HepG2 (cell line): ENCODE measurements at regions of chr18 and their contacts with region 1.

Region 1: GRCh38 chr18:58392324-58393000 is 236.4 kb downstream of the ALPK2 start:
- DNase-seq: no peak
- ATAC-seq: no peak; the same call in 2 of the 3 replicates
- H3K4me3 ChIP-seq: no peak overlapping the region
- H3K27ac ChIP-seq: peak overlapping the region; percentile 53
- H3K4me1 ChIP-seq: peaks cover 86% of the 10 kb centered on the region
- H3K27me3 ChIP-seq: no peaks in the 10 kb centered on the region
- CTCF ChIP-seq: no peak
- EP300 ChIP-seq: no peak
- POLR2A ChIP-seq: peak in 1 of 2 experiments; percentile 11; a peak in 1 of 4 replicates
- RAD21 ChIP-seq: no peak

Region 2: GRCh38 chr18:57959278-57959677 is 433.2 kb before region 1 on chr18:
- CTCF ChIA-PET with region 1: no interaction called
- POLR2A ChIA-PET with region 1: no interaction called
- in situ Hi-C with region 1: loop called (anchors 10 kb)
- intact Hi-C with region 1: loop called (anchors 5 kb)
- DNase-seq: peak; percentile 66
- ATAC-seq: peak; percentile 96
- H3K4me3 ChIP-seq: no peak overlapping the region; a peak in 1 of 6 replicates
- H3K27ac ChIP-seq: no peak overlapping the region
- H3K4me1 ChIP-seq: peaks cover 30% of the 10 kb centered on the region
- H3K27me3 ChIP-seq: no peaks in the 10 kb centered on the region
- CTCF ChIP-seq: peak; percentile 83
- EP300 ChIP-seq: no peak
- POLR2A ChIP-seq: no peak
- RAD21 ChIP-seq: peak; percentile 62; the same call in 1 of the 2 replicates

Region 3: GRCh38 chr18:58051765-58052460 is 340.5 kb before region 1 on chr18:
- CTCF ChIA-PET with region 1: no interaction called
- POLR2A ChIA-PET with region 1: interaction called, 16 read pairs
- in situ Hi-C with region 1: loop called (anchors 5 kb)
- intact Hi-C with region 1: no loop called
- DNase-seq: no peak
- ATAC-seq: no peak
- H3K4me3 ChIP-seq: peak overlapping the region; percentile 12 to 41 (median 36); a peak in 3 of 6 replicates
- H3K27ac ChIP-seq: peak overlapping the region; percentile 37
- H3K4me1 ChIP-seq: peaks cover 77% of the 10 kb centered on the region
- H3K27me3 ChIP-seq: no peaks in the 10 kb centered on the region; a peak in 1 of 5 replicates
- CTCF ChIP-seq: peak; percentile 37
- EP300 ChIP-seq: no peak
- POLR2A ChIP-seq: no peak
- RAD21 ChIP-seq: no peak

Region 4: GRCh38 chr18:58407649-58408407 is 15.4 kb after region 1 on chr18:
- CTCF ChIA-PET with region 1: no interaction called
- POLR2A ChIA-PET with region 1: interaction called, 13 read pairs
- in situ Hi-C with region 1: no loop called
- intact Hi-C with region 1: no loop called
- DNase-seq: peak; percentile 100
- ATAC-seq: peak; percentile 74
- H3K4me3 ChIP-seq: peak overlapping the region in 1 of 3 experiments; percentile 47; a peak in 1 of 6 replicates
- H3K27ac ChIP-seq: peak overlapping the region; percentile 98
- H3K4me1 ChIP-seq: peaks cover 99% of the 10 kb centered on the region
- H3K27me3 ChIP-seq: no peaks in the 10 kb centered on the region
- CTCF ChIP-seq: peak; percentile 59
- EP300 ChIP-seq: peak; percentile 95 to 100
- POLR2A ChIP-seq: peak in 1 of 2 experiments; percentile 51; a peak in 1 of 4 replicates
- RAD21 ChIP-seq: peak; percentile 66

Region 5: DNA sequence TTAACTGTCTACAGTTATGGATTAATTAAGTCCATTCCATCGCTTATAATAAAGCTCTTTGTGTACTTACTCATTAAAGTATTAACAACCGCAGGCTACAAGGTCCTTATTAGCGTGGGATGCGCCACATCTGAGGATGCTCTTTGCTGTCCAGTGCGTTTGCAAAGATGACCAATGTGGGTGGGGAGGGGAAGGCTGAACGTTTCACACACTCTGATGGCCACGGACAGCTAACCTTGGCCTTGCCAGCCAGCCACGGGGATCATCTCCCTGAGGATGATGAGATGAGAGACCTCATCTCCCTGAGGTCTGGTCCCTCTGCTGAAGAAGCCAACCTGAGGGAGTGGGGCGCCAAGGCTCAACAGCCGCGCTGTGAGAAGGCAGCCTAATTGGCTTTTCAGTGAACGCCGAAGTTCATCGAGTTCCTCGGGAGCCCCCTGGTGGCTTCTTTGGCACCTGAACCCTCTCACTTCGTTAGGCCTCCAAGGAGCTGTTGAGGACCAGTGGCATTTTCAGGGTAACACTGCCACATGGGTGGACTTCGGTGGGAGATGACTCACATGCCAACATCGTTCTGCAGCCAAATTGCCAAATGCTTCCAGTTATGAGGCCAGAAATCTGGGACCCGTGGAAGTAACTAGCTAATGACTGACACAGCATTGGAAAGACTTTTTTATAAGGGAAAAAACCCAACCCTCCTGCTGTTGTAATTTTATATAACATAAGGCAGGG is 677.9 kb after region 1 on chr18:
- CTCF ChIA-PET with region 1: no interaction called
- POLR2A ChIA-PET with region 1: no interaction called
- in situ Hi-C with region 1: loop called (anchors 25 kb)
- intact Hi-C with region 1: no loop called
- DNase-seq: peak; percentile 54
- ATAC-seq: peak; percentile 95
- H3K4me3 ChIP-seq: no peak overlapping the region
- H3K27ac ChIP-seq: no peak overlapping the region
- H3K4me1 ChIP-seq: no peaks in the 10 kb centered on the region
- H3K27me3 ChIP-seq: no peaks in the 10 kb centered on the region
- CTCF ChIP-seq: peak; percentile 86
- EP300 ChIP-seq: peak in 1 of 2 experiments; percentile 13; a peak in 1 of 4 replicates
- POLR2A ChIP-seq: no peak
- RAD21 ChIP-seq: peak; percentile 52